ENCODE measurements at regions of chr9 and their contacts with region 1.

Region 1: DNA sequence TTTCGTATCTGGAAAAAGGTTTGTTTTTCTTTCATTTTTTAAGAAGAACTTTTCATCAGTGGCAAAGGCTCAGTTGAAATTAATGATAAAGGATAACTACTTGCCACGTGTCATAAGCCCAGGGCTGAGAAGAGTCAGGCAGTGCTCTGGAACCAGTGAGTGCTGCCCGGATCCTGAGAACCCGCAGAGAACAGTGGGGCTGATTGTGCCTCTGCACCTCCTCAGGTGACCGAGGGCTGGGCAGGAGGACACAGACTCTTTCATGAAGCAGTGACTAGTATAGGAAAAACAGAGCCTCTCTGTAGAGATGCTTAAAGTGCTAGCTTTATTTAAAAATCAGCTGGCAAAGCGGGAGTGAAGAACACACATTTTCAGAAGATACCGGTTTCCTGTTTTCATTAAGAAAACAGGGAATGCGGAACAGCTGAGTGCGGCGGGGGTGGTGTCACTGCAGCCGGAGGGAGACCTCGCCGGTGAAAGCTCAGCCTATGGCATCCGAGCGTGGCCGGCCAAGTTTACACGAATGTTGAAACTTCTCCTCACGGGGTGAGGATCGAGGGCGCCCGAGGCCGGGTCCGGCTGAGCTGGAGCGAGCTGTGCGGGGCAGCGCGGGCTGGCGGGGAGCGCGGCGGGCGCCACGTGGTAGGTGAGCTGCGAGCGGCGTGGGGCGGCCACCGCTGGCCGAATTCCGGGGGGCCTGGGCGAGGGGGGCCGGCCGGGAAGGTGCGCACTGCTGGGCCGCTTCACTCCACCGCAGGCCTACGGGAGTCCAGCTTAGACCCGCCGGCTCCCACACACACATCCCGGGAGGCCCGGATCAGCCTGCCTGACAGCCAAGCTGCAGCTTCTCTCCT is 134.7 kb upstream of the DMRT1 start:
- DNase-seq: peak; percentile 50 to 74 (median 63)
- H3K4me3 ChIP-seq: peak overlapping the region; percentile 49 to 92 (median 86)
- H3K4me3 Mint-ChIP-seq: peak overlapping the region; percentile 81 to 96
- H3K27ac ChIP-seq: peak overlapping the region; percentile 23 to 76
- H3K27ac Mint-ChIP-seq: peak overlapping the region in 5 of 7 donors; percentile 10 to 81 (median 47)
- H3K4me1 ChIP-seq: peaks cover 14 to 22% of the 10 kb centered on the region in 2 donors
- H3K4me1 Mint-ChIP-seq: peaks cover 25% of the 10 kb centered on the region
- H3K27me3 ChIP-seq: no peaks in the 10 kb centered on the region
- H3K27me3 Mint-ChIP-seq: peaks cover 0 to 9% (median 6%) of the 10 kb centered on the region in 3 donors
- CTCF ChIP-seq: no peak

Region 2: DNA sequence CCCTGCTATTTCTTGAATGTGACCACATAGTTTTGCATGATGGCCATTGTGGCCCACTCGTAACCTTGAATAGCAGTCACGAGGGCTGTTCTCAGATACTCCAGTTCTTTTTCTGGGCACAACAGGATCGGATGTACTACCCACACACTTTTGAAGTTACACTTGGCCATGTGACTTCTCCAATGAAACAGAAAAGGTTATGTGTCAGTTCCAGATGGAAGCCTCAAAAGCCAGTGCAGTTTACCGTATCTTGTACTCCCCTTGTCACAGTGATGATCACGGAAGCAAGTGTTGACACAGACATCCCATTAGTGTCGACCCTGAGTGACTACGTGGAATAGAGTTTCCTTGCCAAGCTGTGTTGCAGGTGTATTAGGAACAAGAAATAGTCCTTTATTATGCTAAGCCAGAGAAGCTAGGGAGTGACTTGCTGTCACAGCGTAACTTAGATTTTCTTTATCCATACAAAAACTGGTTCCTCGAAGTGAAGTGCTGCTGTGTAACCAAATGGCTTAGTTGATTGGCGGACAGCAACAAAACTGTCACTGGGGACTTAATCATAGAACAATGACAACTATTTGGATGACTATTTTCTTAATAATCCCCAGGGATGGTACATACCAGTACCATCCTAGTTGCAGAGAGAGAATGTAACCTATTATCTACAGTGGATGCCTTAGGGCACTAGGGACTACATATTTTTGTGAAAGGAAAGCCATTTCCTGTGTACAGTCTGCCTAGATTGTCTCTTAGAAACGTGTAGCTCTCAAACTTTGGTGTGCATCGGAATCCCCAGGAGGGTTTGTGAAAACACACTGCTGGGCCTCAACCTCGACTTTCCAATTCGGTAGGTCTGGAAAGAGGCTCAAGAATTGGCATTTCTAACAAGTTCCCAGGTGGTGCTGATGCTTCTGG is 44.6 kb after region 1 on chr9:
- intact Hi-C with region 1: loop called in 1 of 2 experiments (anchors 5 kb)
- DNase-seq: no peak
- H3K4me3 ChIP-seq: no peak overlapping the region
- H3K4me3 Mint-ChIP-seq: no peak overlapping the region
- H3K27ac ChIP-seq: no peak overlapping the region
- H3K27ac Mint-ChIP-seq: no peak overlapping the region
- H3K4me1 ChIP-seq: peaks cover 34 to 46% of the 10 kb centered on the region in 2 donors
- H3K4me1 Mint-ChIP-seq: peaks cover 55% of the 10 kb centered on the region
- H3K27me3 ChIP-seq: no peaks in the 10 kb centered on the region
- H3K27me3 Mint-ChIP-seq: peaks cover 2 to 6% (median 4%) of the 10 kb centered on the region in 3 donors
- CTCF ChIP-seq: no peak